GM12878 (cell line): ENCODE measurements at regions of chr1 and their contacts with region 1.

Region 1: GRCh38 chr1:224454397-224455066 is 19.9 kb upstream of the WDR26 start:
- DNase-seq: no peak
- ATAC-seq: no peak
- H3K4me3 ChIP-seq: no peak overlapping the region
- H3K27ac ChIP-seq: no peak overlapping the region
- H3K4me1 ChIP-seq: no peaks in the 10 kb centered on the region
- H3K27me3 ChIP-seq: no peaks in the 10 kb centered on the region
- CTCF ChIP-seq: no peak
- EP300 ChIP-seq: no peak
- POLR2A ChIP-seq: no peak
- RAD21 ChIP-seq: no peak

Region 2: DNA sequence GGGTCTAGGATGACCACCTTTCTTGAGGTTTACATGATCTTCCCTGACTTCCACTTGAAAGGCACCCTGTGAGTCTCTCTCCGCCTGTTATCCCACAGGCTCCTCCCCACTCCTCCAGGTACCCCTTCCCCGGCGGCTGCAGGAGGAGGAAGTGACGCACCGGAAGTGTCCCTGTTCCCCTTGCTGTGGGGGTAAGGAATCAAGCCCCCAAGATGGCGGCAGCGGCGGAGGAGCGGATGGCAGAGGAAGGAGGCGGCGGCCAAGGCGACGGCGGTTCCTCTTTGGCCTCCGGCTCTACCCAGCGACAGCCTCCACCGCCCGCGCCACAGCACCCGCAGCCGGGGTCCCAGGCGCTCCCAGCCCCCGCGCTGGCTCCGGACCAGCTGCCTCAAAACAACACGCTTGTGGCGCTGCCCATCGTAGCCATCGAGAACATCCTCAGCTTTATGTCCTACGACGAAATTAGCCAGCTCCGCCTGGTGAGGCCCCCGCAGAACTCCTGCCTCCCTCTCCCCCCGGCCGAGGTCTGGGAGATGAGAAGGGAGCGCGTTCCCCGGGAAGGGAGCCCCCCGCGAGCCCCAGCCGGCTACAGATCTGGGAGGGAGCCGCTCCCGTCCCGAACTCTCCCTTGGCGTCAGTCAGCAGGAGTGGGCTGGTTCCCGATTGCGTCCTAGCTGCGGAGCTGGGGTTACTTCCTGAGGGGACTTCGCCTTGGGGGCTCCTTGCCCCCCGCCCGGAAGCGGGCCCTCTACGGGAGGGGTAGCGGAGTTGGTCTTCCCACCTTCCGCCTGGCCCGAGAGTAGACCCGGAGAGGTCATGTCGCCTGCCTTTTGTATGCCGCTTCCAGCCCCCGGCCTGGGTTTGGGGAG is 340.4 kb before region 1 on chr1 and contains the start of gene FBXO28:
- CTCF ChIA-PET with region 1: interaction called, 40 read pairs
- POLR2A ChIA-PET with region 1: interaction called, 6 read pairs
- RAD21 ChIA-PET with region 1: interaction called, 25 read pairs
- SMC1A ChIA-PET with region 1: interaction called, 41 read pairs
- in situ Hi-C with region 1: loop called (anchors 5 kb)
- intact Hi-C with region 1: loop called (anchors 1 kb)
- DNase-seq: peak; percentile 77
- ATAC-seq: peak; percentile 97
- H3K4me3 ChIP-seq: peak within 1 kb of the TSS; percentile 86
- H3K27ac ChIP-seq: peak within 1 kb of the TSS; percentile 81
- H3K4me1 ChIP-seq: 0 out of 2 replicates have a peak, but pooled peaks cover 2% of the 10 kb centered on the region
- H3K27me3 ChIP-seq: no peaks in the 10 kb centered on the region
- CTCF ChIP-seq: no peak
- EP300 ChIP-seq: no peak
- POLR2A ChIP-seq: peak; percentile 99
- RAD21 ChIP-seq: no peak
- polyA plus RNA-seq, gene FBXO28: 4.3 to 4.5 TPM

Region 3: DNA sequence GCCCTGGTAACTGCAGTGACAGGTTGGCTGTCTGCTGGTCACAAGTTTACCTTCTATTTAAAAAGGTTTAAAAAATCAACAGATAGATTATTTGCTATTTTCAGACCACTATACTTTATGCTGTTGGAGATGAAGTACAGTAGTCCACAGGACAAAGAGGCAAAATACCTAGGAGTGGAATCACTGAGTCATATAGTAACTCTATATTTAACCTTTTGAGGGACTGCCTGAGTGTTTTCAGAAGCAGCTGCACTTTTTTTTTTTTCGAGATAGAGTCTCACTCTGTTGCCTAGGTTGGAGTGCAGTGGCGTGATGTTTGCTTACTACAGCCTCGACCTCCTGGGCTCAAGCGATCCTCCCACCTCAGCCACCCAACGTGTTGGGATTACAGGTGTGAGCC is 86.1 kb before region 1 on chr1:
- CTCF ChIA-PET with region 1: interaction called, 11 read pairs
- POLR2A ChIA-PET with region 1: no interaction called
- RAD21 ChIA-PET with region 1: no interaction called
- SMC1A ChIA-PET with region 1: interaction called, 6 read pairs
- in situ Hi-C with region 1: no loop called
- intact Hi-C with region 1: no loop called
- DNase-seq: peak; percentile 40
- ATAC-seq: peak; percentile 86
- H3K4me3 ChIP-seq: no peak overlapping the region
- H3K27ac ChIP-seq: peak overlapping the region; percentile 32; the same call in 1 of the 2 replicates
- H3K4me1 ChIP-seq: peaks cover 30% of the 10 kb centered on the region
- H3K27me3 ChIP-seq: no peaks in the 10 kb centered on the region
- CTCF ChIP-seq: no peak
- EP300 ChIP-seq: no peak
- POLR2A ChIP-seq: no peak
- RAD21 ChIP-seq: no peak

Region 4: DNA sequence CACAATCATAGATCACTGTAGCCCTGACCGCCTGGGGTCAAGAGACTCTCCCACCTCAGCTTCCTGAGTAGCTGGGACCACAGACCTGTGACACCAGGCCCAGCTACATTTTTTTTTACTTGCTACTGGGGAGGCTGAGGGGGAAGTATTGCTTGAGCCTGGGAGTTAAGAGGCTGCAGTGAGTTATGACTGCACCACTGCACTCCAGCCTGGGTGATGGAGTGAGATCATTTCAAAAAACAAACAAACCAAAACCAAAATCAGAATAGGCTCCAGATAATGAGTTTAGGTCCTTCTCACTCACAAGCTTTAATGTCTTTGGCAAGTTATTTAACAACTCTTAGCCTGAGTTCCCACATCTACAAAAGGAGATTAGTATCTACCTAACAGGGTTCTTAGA is 42.8 kb before region 1 on chr1:
- CTCF ChIA-PET with region 1: interaction called, 14 read pairs
- POLR2A ChIA-PET with region 1: interaction called, 5 read pairs
- RAD21 ChIA-PET with region 1: interaction called, 4 read pairs
- SMC1A ChIA-PET with region 1: interaction called, 7 read pairs
- in situ Hi-C with region 1: no loop called
- intact Hi-C with region 1: no loop called
- DNase-seq: no peak
- ATAC-seq: peak; percentile 45
- H3K4me3 ChIP-seq: no peak overlapping the region
- H3K27ac ChIP-seq: no peak overlapping the region; the same call in 1 of the 2 replicates
- H3K4me1 ChIP-seq: no peaks in the 10 kb centered on the region
- H3K27me3 ChIP-seq: no peaks in the 10 kb centered on the region
- CTCF ChIP-seq: no peak
- EP300 ChIP-seq: no peak
- POLR2A ChIP-seq: no peak
- RAD21 ChIP-seq: no peak

Region 5: GRCh38 chr1:224497714-224498573 is 43.4 kb after region 1 on chr1:
- CTCF ChIA-PET with region 1: interaction called, 12 read pairs
- POLR2A ChIA-PET with region 1: no interaction called
- RAD21 ChIA-PET with region 1: interaction called, 6 read pairs
- SMC1A ChIA-PET with region 1: interaction called, 10 read pairs
- in situ Hi-C with region 1: no loop called
- intact Hi-C with region 1: no loop called
- DNase-seq: peak; percentile 80
- ATAC-seq: peak; percentile 98
- H3K4me3 ChIP-seq: peak overlapping the region; percentile 28; the same call in 1 of the 2 replicates
- H3K27ac ChIP-seq: peak overlapping the region; percentile 92
- H3K4me1 ChIP-seq: peaks cover 37% of the 10 kb centered on the region
- H3K27me3 ChIP-seq: no peaks in the 10 kb centered on the region
- CTCF ChIP-seq: no peak
- EP300 ChIP-seq: peak in 1 of 2 experiments; percentile 82; a peak in 2 of 4 replicates
- POLR2A ChIP-seq: peak; percentile 54
- RAD21 ChIP-seq: no peak

Region 6: GRCh38 chr1:224675590-224675989 is 221.1 kb after region 1 on chr1:
- CTCF ChIA-PET with region 1: no interaction called
- POLR2A ChIA-PET with region 1: no interaction called
- RAD21 ChIA-PET with region 1: no interaction called
- SMC1A ChIA-PET with region 1: no interaction called
- in situ Hi-C with region 1: no loop called
- intact Hi-C with region 1: no loop called
- DNase-seq: no peak
- ATAC-seq: peak; percentile 73
- H3K4me3 ChIP-seq: no peak overlapping the region
- H3K27ac ChIP-seq: no peak overlapping the region
- H3K4me1 ChIP-seq: peaks cover 3% of the 10 kb centered on the region; the same call in 1 of the 2 replicates
- H3K27me3 ChIP-seq: no peaks in the 10 kb centered on the region; a peak in 1 of 4 replicates
- CTCF ChIP-seq: no peak
- EP300 ChIP-seq: no peak; a peak in 1 of 4 replicates
- POLR2A ChIP-seq: no peak
- RAD21 ChIP-seq: no peak